HEK293 (cell line): ENCODE measurements at regions of chr22 and their contacts with region 1.

Region 1: DNA sequence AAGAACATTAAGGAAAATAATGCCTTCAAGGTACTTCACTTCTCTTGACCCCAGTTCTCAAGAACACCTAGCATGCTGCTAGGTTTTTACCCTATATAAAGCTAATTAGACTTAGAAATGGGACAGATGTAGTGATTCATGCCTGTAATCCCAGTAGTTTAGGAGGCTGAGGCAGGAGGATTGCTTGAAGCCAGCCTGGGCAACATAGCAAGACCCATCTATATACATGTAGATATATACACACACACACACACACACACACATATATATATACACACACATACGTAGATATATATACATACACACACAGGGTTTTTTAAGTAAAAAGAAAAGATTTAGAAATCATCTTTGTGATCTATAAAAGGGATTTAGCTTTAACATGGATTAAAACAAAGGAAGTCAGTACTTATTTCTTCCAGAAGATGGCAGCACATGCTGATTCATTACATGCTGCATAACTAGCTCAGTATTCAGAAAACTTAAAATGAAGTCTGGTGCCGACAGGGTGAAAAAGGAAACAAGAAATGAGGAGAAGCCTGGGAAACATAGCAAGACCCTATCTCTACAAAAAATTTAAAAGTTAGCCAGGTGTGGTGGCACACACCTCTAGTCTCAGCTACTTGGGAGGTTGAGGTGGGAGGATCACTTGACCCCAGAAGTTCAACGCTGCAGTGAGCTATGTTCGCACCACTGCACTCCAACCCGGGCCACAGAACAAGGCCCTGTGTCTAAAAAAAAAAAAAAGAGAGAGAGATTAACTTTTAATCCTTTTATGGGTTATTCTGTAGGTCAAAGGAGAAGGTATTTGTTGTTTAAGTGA is 28.5 kb upstream of the RBX1 start:
- H3K4me3 ChIP-seq: no peak overlapping the region
- H3K27ac ChIP-seq: no peak overlapping the region
- H3K4me1 ChIP-seq: no peaks in the 10 kb centered on the region
- CTCF ChIP-seq: 0 out of 2 replicates have a peak, but pooled peaks have one; percentile 49

Region 2: GRCh38 chr22:40668611-40669411 is 253.9 kb before region 1 on chr22:
- CTCF ChIA-PET with region 1: no interaction called
- POLR2A ChIA-PET with region 1: no interaction called
- H3K4me3 ChIP-seq: no peak overlapping the region
- H3K27ac ChIP-seq: no peak overlapping the region
- H3K4me1 ChIP-seq: no peaks in the 10 kb centered on the region; the same call in 1 of the 2 replicates
- CTCF ChIP-seq: no peak

Region 3: GRCh38 chr22:40960145-40960544 is 37.5 kb after region 1 on chr22:
- CTCF ChIA-PET with region 1: interaction called, 18 read pairs
- POLR2A ChIA-PET with region 1: no interaction called
- H3K4me3 ChIP-seq: no peak overlapping the region
- H3K27ac ChIP-seq: no peak overlapping the region
- H3K4me1 ChIP-seq: no peaks in the 10 kb centered on the region
- CTCF ChIP-seq: no peak

Region 4: DNA sequence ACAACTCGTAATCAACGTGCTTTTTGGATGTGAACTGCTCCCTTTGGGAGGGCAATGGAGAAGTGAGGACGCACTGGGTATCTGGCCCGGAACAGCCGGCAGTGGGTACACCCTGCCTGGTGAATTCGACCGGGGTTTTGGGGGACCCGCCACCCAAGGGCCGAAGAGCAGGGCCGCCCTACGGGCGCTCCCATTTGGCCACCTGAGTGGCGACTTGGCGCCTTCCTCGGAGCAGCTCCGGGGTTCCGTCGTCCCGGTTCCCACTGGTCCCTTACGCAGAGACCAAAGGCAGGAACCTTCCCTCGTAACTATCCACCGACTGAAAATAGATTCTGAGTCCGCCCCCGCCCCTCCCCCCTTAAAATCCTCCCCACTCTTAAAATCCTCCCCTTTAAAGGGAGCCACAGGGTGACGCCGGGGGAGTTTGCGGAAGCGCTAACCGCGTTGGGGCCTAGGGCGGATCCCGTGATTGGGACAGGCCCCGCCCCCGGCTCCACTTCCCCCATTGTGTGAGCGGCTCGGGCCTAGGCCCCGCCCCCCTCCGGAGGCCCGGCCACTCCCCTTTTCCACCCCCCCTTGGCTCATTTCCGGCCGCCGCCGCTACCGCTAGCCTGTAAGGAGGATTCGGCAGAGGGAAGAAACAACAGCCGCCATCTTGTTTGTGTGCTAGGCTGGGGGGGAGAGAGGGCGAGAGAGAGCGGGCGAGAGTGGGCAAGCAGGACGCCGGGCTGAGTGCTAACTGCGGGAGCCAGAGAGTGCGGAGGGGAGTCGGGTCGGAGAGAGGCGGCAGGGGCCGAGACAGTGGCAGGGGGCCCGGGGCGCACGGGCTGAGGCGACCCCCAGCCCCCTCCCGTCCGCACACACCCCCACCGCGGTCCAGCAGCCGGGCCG is 168.7 kb after region 1 on chr22:
- CTCF ChIA-PET with region 1: interaction called, 15 read pairs
- POLR2A ChIA-PET with region 1: interaction called, 4 read pairs
- H3K4me3 ChIP-seq: peak overlapping the region; percentile 98
- H3K27ac ChIP-seq: peak overlapping the region; percentile 100
- H3K4me1 ChIP-seq: peaks cover 3% of the 10 kb centered on the region
- CTCF ChIP-seq: peak; percentile 37

Region 5: GRCh38 chr22:41237707-41238569 is 315.2 kb after region 1 on chr22:
- CTCF ChIA-PET with region 1: interaction called, 49 read pairs
- POLR2A ChIA-PET with region 1: no interaction called
- H3K4me3 ChIP-seq: no peak overlapping the region; the same call in 1 of the 2 replicates
- H3K27ac ChIP-seq: no peak overlapping the region
- H3K4me1 ChIP-seq: peaks cover 3% of the 10 kb centered on the region; the same call in 1 of the 2 replicates
- CTCF ChIP-seq: no peak